Stomach (tissue), 19 donors: ENCODE measurements at regions of chr12 and their contacts with region 1.

Region 1: GRCh38 chr12:49643961-49644619 is 20.7 kb downstream of the PRPF40B start:
- DNase-seq: peak in 1 of 2 donors; percentile 26
- H3K4me3 ChIP-seq: no peak overlapping the region
- H3K27ac ChIP-seq: peak overlapping the region in 1 of 5 donors; percentile 44
- H3K4me1 ChIP-seq: peaks cover 8 to 35% (median 32%) of the 10 kb centered on the region in 4 donors
- H3K27me3 ChIP-seq: no peaks in the 10 kb centered on the region
- CTCF ChIP-seq: no peak
- EP300 ChIP-seq: no peak
- POLR2A ChIP-seq: no peak

Region 2: GRCh38 chr12:49707812-49708147 is 63.7 kb after region 1 on chr12:
- intact Hi-C with region 1: loop called (anchors 2 kb)
- DNase-seq: no peak
- H3K4me3 ChIP-seq: peak overlapping the region in 2 of 4 donors; percentile 83 to 86
- H3K27ac ChIP-seq: no peak overlapping the region
- H3K4me1 ChIP-seq: peaks cover 0 to 46% (median 31%) of the 10 kb centered on the region in 4 donors
- H3K27me3 ChIP-seq: no peaks in the 10 kb centered on the region
- CTCF ChIP-seq: peak in 1 of 7 experiments; percentile 19
- EP300 ChIP-seq: no peak
- POLR2A ChIP-seq: no peak